ENCODE measurements at regions of chr15 and their contacts with region 1.

Region 1: DNA sequence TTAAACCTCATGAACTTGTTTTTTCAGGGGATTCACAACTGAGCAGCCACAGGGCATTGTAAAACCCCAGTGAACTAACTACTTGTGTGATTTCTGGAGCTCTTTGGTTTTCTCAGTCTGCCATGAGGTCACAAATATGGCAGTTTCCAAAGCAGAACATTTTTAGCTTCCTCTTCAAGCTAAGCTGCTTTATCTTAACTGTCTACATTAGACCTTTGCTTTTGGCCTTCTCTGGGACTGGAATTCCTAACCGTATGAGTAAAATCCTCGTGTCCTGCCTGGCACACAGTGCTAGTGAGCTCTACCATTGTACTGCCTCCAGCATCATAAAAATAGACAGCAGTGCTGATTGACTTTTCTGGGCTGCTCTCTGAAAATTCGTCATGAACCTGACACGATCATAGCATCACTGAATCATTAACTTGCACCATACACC is 22.1 kb downstream of the CDIN1 start:
- DNase-seq: peak; percentile 72 to 75
- ATAC-seq: peak; percentile 92
- H3K4me3 ChIP-seq: no peak overlapping the region
- H3K27ac ChIP-seq: peak overlapping the region; percentile 96 to 97
- H3K4me1 ChIP-seq: peaks cover 2 to 3% of the 10 kb centered on the region in 2 donors
- H3K27me3 ChIP-seq: no peaks in the 10 kb centered on the region

Region 2: DNA sequence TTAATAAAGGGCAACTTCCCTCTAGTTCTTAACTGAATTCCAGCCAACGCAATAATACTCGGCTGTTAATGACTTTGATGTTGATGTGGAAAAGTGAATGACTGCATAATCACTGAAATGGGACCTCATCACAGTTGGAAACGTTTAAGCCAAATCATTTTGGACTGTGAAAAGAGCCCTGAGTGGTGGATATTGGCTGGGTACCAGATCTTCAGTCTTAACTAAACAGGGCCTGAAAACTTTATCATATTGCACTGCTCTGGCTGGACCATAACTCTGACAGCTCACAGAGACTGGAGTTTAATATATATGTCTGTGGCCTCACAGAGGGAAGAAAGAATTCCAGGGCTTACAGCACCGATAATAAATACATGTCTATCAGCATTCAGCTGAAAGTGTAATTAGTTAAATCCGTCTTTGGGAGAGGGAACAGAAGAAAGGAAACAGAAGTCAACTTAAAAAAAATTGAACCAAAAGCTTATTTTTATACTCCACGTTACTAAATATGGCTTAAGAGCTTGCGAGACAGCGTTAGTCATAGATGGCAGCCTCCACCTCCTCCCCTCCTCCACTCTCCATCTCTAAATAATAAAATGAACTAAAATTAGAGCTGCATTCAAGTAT is 244.4 kb before region 1 on chr15:
- intact Hi-C with region 1: loop called in 1 of 2 experiments (anchors 10 kb)
- DNase-seq: no peak
- ATAC-seq: peak; percentile 89
- H3K4me3 ChIP-seq: no peak overlapping the region
- H3K27ac ChIP-seq: peak overlapping the region; percentile 51 to 85
- H3K4me1 ChIP-seq: peaks cover 6 to 7% of the 10 kb centered on the region in 2 donors
- H3K27me3 ChIP-seq: no peaks in the 10 kb centered on the region

Region 3: GRCh38 chr15:36617529-36618196 is 16.1 kb after region 1 on chr15:
- intact Hi-C with region 1: no loop called
- DNase-seq: no peak
- ATAC-seq: no peak
- H3K4me3 ChIP-seq: no peak overlapping the region
- H3K27ac ChIP-seq: no peak overlapping the region
- H3K4me1 ChIP-seq: no peaks in the 10 kb centered on the region
- H3K27me3 ChIP-seq: no peaks in the 10 kb centered on the region